ENCODE measurements at regions of chr14 and their contacts with region 1.

Region 1: GRCh38 chr14:100192672-100193416 is 33.4 kb upstream of the DEGS2 start:
- DNase-seq: peak; percentile 99 to 100 (median 100)
- H3K4me3 ChIP-seq: peak overlapping the region; percentile 47
- H3K4me3 Mint-ChIP-seq: peak overlapping the region; percentile 48 to 82 (median 68)
- H3K27ac ChIP-seq: peak overlapping the region; percentile 75
- H3K27ac Mint-ChIP-seq: peak overlapping the region; percentile 89 to 95 (median 91)
- H3K4me1 ChIP-seq: peaks cover 13% of the 10 kb centered on the region
- H3K4me1 Mint-ChIP-seq: peaks cover 10 to 13% (median 12%) of the 10 kb centered on the region in 3 donors
- H3K27me3 ChIP-seq: no peaks in the 10 kb centered on the region
- H3K27me3 Mint-ChIP-seq: no peaks in the 10 kb centered on the region

Region 2: DNA sequence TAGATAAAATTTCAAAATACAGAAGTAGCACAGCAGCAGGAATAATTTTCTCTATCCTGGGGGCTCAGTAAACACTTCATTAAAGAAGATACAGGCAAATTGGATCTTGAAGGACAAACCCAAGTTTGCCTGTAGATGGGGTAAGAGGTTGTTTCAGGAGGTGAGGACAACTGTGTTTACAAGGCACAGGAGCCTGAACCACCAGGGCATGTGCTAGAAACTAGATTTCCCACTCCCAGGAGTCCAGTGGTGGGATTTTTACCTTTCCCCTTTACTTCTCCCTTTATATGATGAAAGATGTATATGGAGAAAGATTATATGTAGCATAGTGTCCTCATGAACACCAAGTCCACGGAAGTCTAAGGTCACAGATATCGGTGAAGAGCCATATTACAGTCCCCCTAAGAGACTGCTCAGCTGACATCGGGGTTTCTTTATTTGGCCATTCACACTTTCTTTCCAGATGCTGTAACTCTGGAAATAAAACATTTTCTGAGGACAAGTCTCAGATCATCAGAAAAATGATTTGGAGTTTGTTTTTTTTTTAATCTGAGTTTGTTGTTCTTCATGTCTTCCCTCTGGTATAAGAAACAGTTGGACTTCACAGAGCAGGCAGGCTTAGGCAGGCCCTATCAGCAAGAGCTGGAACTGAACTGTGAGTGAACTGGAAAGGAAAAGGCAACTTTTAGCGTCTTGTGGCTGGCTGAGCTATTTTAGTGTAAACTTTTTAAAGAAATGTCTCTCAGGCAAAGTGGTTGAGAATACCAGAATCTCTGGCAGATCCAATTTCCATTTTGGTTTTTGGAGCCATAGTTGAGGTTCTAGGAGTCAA is 135.7 kb before region 1 on chr14:
- CTCF ChIA-PET with region 1: interaction called, 16 read pairs
- POLR2A ChIA-PET with region 1: no interaction called
- DNase-seq: peak in 3 of 5 donors; percentile 54 to 68 (median 57)
- H3K4me3 ChIP-seq: no peak overlapping the region
- H3K4me3 Mint-ChIP-seq: peak overlapping the region in 4 of 7 donors; percentile 15 to 62 (median 43)
- H3K27ac ChIP-seq: no peak overlapping the region
- H3K27ac Mint-ChIP-seq: peak overlapping the region; percentile 64 to 92 (median 88)
- H3K4me1 ChIP-seq: peaks cover 52% of the 10 kb centered on the region
- H3K4me1 Mint-ChIP-seq: peaks cover 47 to 55% (median 51%) of the 10 kb centered on the region in 3 donors
- H3K27me3 ChIP-seq: no peaks in the 10 kb centered on the region
- H3K27me3 Mint-ChIP-seq: no peaks in the 10 kb centered on the region

Region 3: DNA sequence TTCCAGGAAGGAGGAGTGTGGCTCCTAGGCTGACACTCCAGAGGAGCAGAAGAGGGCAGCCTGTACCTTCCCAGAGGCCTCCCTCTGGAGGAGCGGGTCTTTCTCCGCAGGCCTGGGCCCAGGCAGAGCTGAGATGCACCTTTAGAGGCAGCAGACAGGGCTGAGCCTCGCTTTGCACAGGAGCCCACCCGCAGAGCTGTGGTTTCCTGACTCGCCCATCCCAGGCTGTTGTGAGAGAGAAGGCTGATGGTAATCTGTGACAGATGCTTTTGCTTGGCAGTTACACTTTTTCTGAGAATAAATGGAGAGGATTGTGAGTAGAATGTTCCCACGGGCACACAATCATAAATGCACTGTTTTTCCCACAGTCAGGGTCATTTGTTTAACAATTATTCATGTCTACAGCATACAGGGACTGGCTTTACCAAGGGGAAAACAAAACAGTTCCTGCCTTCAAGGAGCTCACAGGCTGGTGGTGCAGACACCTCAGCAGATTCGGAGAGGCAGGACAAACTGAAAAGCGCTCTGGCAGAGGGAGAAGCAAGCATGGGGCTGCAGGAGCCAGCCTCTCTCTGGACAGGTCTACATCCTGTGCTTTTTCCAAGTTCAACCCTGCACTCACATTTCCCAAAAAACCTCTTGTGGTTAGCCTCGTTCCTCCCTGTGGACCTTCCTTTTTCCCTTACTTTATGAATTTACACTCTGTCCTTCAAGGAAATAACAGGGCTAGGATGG is 113.7 kb before region 1 on chr14:
- CTCF ChIA-PET with region 1: interaction called, 14 read pairs
- POLR2A ChIA-PET with region 1: no interaction called
- DNase-seq: peak; percentile 81 to 93 (median 89)
- H3K4me3 ChIP-seq: peak overlapping the region; percentile 44
- H3K4me3 Mint-ChIP-seq: peak overlapping the region; percentile 70 to 88 (median 80)
- H3K27ac ChIP-seq: peak overlapping the region; percentile 58
- H3K27ac Mint-ChIP-seq: peak overlapping the region; percentile 85 to 98 (median 94)
- H3K4me1 ChIP-seq: peaks cover 96% of the 10 kb centered on the region
- H3K4me1 Mint-ChIP-seq: peaks cover 96 to 100% (median 99%) of the 10 kb centered on the region in 3 donors
- H3K27me3 ChIP-seq: no peaks in the 10 kb centered on the region
- H3K27me3 Mint-ChIP-seq: no peaks in the 10 kb centered on the region

Region 4: GRCh38 chr14:100155042-100155846 is 37.6 kb before region 1 on chr14:
- CTCF ChIA-PET with region 1: interaction called, 11 read pairs
- POLR2A ChIA-PET with region 1: no interaction called
- DNase-seq: no peak
- H3K4me3 ChIP-seq: no peak overlapping the region
- H3K4me3 Mint-ChIP-seq: no peak overlapping the region
- H3K27ac ChIP-seq: no peak overlapping the region
- H3K27ac Mint-ChIP-seq: no peak overlapping the region
- H3K4me1 ChIP-seq: no peaks in the 10 kb centered on the region
- H3K4me1 Mint-ChIP-seq: peaks cover 0 to 8% (median 6%) of the 10 kb centered on the region in 3 donors
- H3K27me3 ChIP-seq: no peaks in the 10 kb centered on the region
- H3K27me3 Mint-ChIP-seq: peaks cover 24 to 25% of the 10 kb centered on the region in 2 donors

Region 5: GRCh38 chr14:100213956-100214774 is 21.3 kb after region 1 on chr14:
- CTCF ChIA-PET with region 1: interaction called, 30 read pairs
- POLR2A ChIA-PET with region 1: interaction called, 4 read pairs
- DNase-seq: peak; percentile 88 to 93 (median 90)
- H3K4me3 ChIP-seq: peak overlapping the region; percentile 74
- H3K4me3 Mint-ChIP-seq: peak overlapping the region; percentile 79 to 92 (median 82)
- H3K27ac ChIP-seq: peak overlapping the region; percentile 88
- H3K27ac Mint-ChIP-seq: peak overlapping the region; percentile 72 to 98 (median 94)
- H3K4me1 ChIP-seq: peaks cover 24% of the 10 kb centered on the region
- H3K4me1 Mint-ChIP-seq: peaks cover 17 to 26% (median 24%) of the 10 kb centered on the region in 3 donors
- H3K27me3 ChIP-seq: no peaks in the 10 kb centered on the region
- H3K27me3 Mint-ChIP-seq: peaks cover 0 to 1% of the 10 kb centered on the region in 2 donors

Region 6: GRCh38 chr14:100246826-100247428 is 54.1 kb after region 1 on chr14:
- CTCF ChIA-PET with region 1: interaction called, 39 read pairs
- POLR2A ChIA-PET with region 1: no interaction called
- DNase-seq: peak in 2 of 5 donors; percentile 24 to 46
- H3K4me3 ChIP-seq: no peak overlapping the region
- H3K4me3 Mint-ChIP-seq: peak overlapping the region in 5 of 7 donors; percentile 30 to 71 (median 35)
- H3K27ac ChIP-seq: no peak overlapping the region
- H3K27ac Mint-ChIP-seq: peak overlapping the region; percentile 31 to 90 (median 70)
- H3K4me1 ChIP-seq: peaks cover 78% of the 10 kb centered on the region
- H3K4me1 Mint-ChIP-seq: peaks cover 66 to 89% (median 83%) of the 10 kb centered on the region in 3 donors
- H3K27me3 ChIP-seq: no peaks in the 10 kb centered on the region
- H3K27me3 Mint-ChIP-seq: no peaks in the 10 kb centered on the region

Region 7: GRCh38 chr14:100621806-100622205 is 429.0 kb after region 1 on chr14:
- CTCF ChIA-PET with region 1: no interaction called
- POLR2A ChIA-PET with region 1: no interaction called
- DNase-seq: peak in 1 of 5 donors; percentile 30
- H3K4me3 ChIP-seq: no peak overlapping the region
- H3K4me3 Mint-ChIP-seq: no peak overlapping the region
- H3K27ac ChIP-seq: no peak overlapping the region
- H3K27ac Mint-ChIP-seq: peak overlapping the region in 1 of 8 donors; percentile 72
- H3K4me1 ChIP-seq: peaks cover 18% of the 10 kb centered on the region
- H3K4me1 Mint-ChIP-seq: peaks cover 19 to 27% (median 23%) of the 10 kb centered on the region in 3 donors
- H3K27me3 ChIP-seq: no peaks in the 10 kb centered on the region
- H3K27me3 Mint-ChIP-seq: peaks cover 14 to 37% of the 10 kb centered on the region in 2 donors

Measured in CD8-positive, alpha-beta memory T cell (primary cell).